A673 (cell line): ENCODE measurements at regions of chr14 and their contacts with region 1.

Region 1: GRCh38 chr14:103014466-103015319 is 42.7 kb downstream of the CDC42BPB start:
- DNase-seq: peak; percentile 74
- H3K4me3 ChIP-seq: no peak overlapping the region
- H3K27ac ChIP-seq: peak overlapping the region; percentile 72
- H3K4me1 ChIP-seq: peaks cover 17% of the 10 kb centered on the region
- H3K27me3 ChIP-seq: no peaks in the 10 kb centered on the region
- CTCF ChIP-seq: no peak

Region 2: GRCh38 chr14:102071283-102071998 is 943.3 kb before region 1 on chr14:
- CTCF ChIA-PET with region 1: no interaction called
- POLR2A ChIA-PET with region 1: interaction called, 33 read pairs
- intact Hi-C with region 1: no loop called
- DNase-seq: peak; percentile 75
- H3K4me3 ChIP-seq: no peak overlapping the region
- H3K27ac ChIP-seq: peak overlapping the region; percentile 9
- H3K4me1 ChIP-seq: peaks cover 5% of the 10 kb centered on the region
- H3K27me3 ChIP-seq: no peaks in the 10 kb centered on the region
- CTCF ChIP-seq: no peak

Region 3: GRCh38 chr14:102430212-102430908 is 584.3 kb before region 1 on chr14:
- CTCF ChIA-PET with region 1: no interaction called
- POLR2A ChIA-PET with region 1: no interaction called
- intact Hi-C with region 1: no loop called
- DNase-seq: no peak
- H3K4me3 ChIP-seq: no peak overlapping the region
- H3K27ac ChIP-seq: no peak overlapping the region
- H3K4me1 ChIP-seq: no peaks in the 10 kb centered on the region
- H3K27me3 ChIP-seq: no peaks in the 10 kb centered on the region
- CTCF ChIP-seq: no peak

Region 4: DNA sequence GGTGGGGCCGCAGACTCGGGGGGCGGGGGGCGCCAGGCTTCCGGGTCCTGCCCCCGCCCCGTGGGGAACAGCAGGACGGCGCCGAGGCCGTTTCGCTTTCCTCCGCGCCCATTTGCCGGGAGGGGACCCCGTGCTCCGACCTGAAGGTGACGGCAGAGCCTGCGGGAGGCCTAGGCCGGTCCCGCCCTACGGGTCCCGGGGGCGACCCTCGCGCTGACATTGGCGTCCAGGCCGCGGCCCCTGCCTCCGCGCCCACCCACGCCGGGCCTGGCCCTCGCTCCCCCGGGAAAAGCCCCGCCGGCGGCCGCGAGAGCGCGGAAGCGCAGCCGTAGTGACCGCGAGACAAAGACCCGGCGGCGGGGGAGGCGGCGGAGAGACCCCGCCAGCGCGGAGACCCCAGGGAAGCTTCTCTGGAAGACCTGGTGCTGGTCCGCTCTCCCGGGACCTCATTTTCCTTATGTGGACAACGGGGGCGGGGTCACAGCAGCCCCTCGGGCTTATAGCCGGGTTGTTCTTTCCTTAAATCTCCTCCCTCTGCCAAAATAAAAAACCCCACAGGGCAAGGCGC is 459.3 kb before region 1 on chr14:
- CTCF ChIA-PET with region 1: no interaction called
- POLR2A ChIA-PET with region 1: interaction called, 13 read pairs
- intact Hi-C with region 1: no loop called
- DNase-seq: peak; percentile 81
- H3K4me3 ChIP-seq: peak overlapping the region; percentile 62
- H3K27ac ChIP-seq: peak overlapping the region; percentile 92
- H3K4me1 ChIP-seq: peaks cover 11% of the 10 kb centered on the region
- H3K27me3 ChIP-seq: no peaks in the 10 kb centered on the region
- CTCF ChIP-seq: no peak